Activated CD4-positive, alpha-beta memory T cell treated with anti-CD3 and anti-CD28 coated beads for 36 hours (primary cell): ENCODE measurements at regions of chr10 and their contacts with region 1.

Region 1: GRCh38 chr10:14507176-14507575 is 176.5 kb upstream of the FRMD4A start:
- DNase-seq: peak; percentile 72
- H3K4me3 Mint-ChIP-seq: no peak overlapping the region
- H3K27ac Mint-ChIP-seq: peak overlapping the region; percentile 53
- H3K4me1 Mint-ChIP-seq: peaks cover 37% of the 10 kb centered on the region
- H3K27me3 Mint-ChIP-seq: no peaks in the 10 kb centered on the region

Region 2: GRCh38 chr10:14528450-14528849 is 21.3 kb after region 1 on chr10:
- CTCF ChIA-PET with region 1: interaction called, 4 read pairs
- POLR2A ChIA-PET with region 1: interaction called, 5 read pairs
- intact Hi-C with region 1: loop called (anchors 1 kb)
- DNase-seq: no peak
- H3K4me3 Mint-ChIP-seq: peak overlapping the region; percentile 50
- H3K27ac Mint-ChIP-seq: peak overlapping the region; percentile 80
- H3K4me1 Mint-ChIP-seq: peaks cover 89% of the 10 kb centered on the region
- H3K27me3 Mint-ChIP-seq: no peaks in the 10 kb centered on the region

Region 3: DNA sequence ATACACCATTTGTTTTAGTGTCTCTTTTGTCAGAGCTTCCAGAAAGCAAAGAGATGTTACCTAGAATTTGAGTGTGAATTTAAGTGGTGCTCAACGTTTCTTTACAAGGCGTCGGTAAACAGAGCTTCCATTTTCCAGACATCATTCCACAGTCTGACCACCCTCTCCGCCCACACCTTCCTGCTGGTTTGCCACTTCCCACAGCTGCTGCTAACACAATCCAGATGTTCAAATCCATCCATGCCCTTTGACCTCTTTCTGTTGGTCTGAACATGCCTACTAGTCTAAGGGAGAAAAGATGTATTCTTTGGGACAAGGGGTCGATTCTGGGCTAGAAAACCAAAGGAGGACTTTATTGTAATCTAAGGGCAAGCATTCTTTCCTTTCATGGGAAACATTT is 181.4 kb after region 1 on chr10:
- CTCF ChIA-PET with region 1: no interaction called
- POLR2A ChIA-PET with region 1: no interaction called
- intact Hi-C with region 1: no loop called
- DNase-seq: no peak
- H3K4me3 Mint-ChIP-seq: no peak overlapping the region
- H3K27ac Mint-ChIP-seq: no peak overlapping the region
- H3K4me1 Mint-ChIP-seq: peaks cover 8% of the 10 kb centered on the region
- H3K27me3 Mint-ChIP-seq: no peaks in the 10 kb centered on the region

Region 4: DNA sequence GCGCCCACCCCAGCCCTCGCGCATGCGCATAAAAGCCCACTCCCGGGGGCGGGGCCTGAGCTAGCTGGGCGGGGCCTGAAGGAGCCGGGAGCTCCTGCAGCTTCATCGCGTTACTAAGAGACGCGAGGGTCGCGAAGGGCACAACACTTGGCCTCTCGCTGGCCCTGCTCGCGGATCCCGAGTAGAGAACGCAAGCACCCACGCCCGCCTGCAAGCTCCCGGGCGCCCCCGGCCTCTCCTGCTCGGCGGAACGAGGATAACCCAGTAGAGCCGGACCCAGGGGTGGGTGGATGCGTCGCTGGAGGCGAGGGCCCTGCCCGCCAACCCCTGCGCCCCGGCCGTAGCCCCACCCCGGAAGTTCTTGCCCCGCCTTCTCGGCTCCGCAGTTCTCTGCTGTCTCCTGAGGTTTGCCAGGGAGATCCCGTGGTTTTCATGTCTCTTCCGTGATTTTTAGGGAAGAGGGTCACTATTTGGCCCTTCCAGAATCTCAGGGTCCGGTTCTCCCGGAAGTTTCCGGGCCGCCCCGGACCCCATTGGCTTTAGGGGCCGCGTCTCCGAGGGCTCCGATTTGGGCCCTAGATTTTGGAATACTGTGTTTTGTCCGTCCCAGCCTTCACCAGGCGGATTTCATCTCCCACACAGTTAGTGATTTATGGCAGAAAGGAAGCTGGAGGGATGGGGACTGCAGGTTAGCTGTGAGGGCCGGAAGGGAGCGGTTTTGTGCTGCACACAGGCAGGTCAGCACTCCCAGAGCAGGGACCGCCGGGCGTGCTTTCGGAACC is 452.3 kb after region 1 on chr10 and contains the start of gene MEIG1:
- CTCF ChIA-PET with region 1: no interaction called
- POLR2A ChIA-PET with region 1: no interaction called
- intact Hi-C with region 1: loop called (anchors 5 kb)
- DNase-seq: peak; percentile 95
- H3K4me3 Mint-ChIP-seq: peak within 1 kb of the TSS; percentile 88
- H3K27ac Mint-ChIP-seq: peak within 1 kb of the TSS; percentile 95
- H3K4me1 Mint-ChIP-seq: peaks cover 24% of the 10 kb centered on the region
- H3K27me3 Mint-ChIP-seq: no peaks in the 10 kb centered on the region
- total RNA-seq, gene MEIG1: 0.95 to 1.4 TPM

Region 5: DNA sequence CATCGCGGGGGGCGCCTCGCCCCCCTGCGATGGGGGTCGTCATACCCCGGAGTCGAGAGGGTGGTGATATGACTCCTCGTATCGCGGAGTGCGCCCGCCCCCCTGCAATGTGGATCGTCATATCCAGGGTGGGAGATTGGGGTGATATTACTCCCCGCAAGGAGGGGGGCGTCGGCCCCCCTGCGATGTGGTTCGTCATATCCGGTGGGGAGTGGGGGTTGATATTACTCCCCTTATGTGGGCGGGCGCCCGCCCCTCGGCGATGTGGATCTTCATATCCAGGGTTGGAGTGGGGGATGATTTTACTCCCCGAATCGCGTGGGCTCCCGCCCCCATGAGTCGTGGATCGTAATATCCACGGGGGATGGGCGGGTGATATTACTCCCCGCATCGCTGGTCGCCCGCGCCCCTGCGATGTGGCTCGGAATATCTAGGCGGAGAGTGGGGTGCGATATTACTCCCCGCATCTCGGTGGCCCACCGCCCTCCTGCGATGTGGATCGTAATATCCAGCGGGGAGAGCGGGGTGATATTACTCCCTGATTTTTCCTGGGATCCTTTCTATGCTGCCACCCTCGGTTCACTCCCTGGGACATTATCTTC is 488.9 kb after region 1 on chr10:
- CTCF ChIA-PET with region 1: no interaction called
- POLR2A ChIA-PET with region 1: no interaction called
- intact Hi-C with region 1: no loop called
- DNase-seq: no peak
- H3K4me3 Mint-ChIP-seq: no peak overlapping the region
- H3K27ac Mint-ChIP-seq: no peak overlapping the region
- H3K4me1 Mint-ChIP-seq: peaks cover 4% of the 10 kb centered on the region
- H3K27me3 Mint-ChIP-seq: peaks cover 3% of the 10 kb centered on the region